ENCODE measurements at regions of chr19 and their contacts with region 1.

Region 1: GRCh38 chr19:43416951-43417623 is 2.4 kb downstream of the TEX101 start:
- DNase-seq: no peak
- H3K4me3 ChIP-seq: no peak overlapping the region
- H3K27ac ChIP-seq: no peak overlapping the region
- H3K4me1 ChIP-seq: no peaks in the 10 kb centered on the region
- H3K27me3 ChIP-seq: no peaks in the 10 kb centered on the region
- CTCF ChIP-seq: no peak

Region 2: GRCh38 chr19:43305658-43306057 is 111.4 kb before region 1 on chr19:
- CTCF ChIA-PET with region 1: no interaction called
- dilution Hi-C with region 1: loop called (anchors 5 kb)
- in situ Hi-C with region 1: loop called in 1 of 2 experiments (anchors 10 kb)
- intact Hi-C with region 1: no loop called
- DNase-seq: no peak
- H3K4me3 ChIP-seq: no peak overlapping the region
- H3K27ac ChIP-seq: no peak overlapping the region
- H3K4me1 ChIP-seq: peaks cover 6% of the 10 kb centered on the region
- H3K27me3 ChIP-seq: no peaks in the 10 kb centered on the region
- CTCF ChIP-seq: peak in 1 of 2 donors; percentile 5

Region 3: DNA sequence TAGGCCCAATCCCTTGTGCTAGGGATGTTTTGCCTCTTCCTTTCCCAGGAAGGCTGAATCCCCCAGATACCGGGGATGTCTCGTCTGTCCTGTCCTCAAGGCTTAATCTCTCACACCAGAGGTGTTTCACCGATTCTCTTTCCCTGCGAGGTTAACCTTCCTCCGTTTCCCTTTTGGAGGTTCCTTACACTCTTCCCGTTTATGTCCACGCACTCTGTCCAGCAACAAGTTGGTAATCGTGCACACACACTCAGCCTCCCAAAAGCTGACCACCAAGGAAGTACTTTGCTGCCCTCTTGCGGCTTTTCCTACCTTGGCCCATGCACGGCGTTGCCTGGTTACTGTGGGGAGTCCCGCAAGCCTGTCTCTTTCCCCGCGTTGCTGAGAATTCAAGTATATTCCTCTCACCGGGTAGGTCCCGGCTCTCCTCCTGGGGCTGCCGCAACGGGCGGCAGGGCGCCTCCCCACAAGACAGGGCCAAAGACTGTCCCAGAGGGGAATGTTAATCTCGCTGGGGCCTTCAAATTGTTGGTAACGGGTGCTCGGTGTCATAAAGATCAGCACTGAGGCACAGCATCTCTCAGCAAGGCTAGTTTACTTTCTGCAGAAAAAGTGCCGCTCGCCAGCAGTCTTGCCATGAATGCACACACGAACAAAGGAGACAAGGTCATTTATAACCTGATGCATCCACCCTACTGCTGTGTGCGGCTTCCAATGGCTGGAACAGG is 100.3 kb before region 1 on chr19:
- CTCF ChIA-PET with region 1: no interaction called
- dilution Hi-C with region 1: no loop called
- in situ Hi-C with region 1: loop called in 1 of 2 experiments (anchors 10 kb)
- intact Hi-C with region 1: no loop called
- DNase-seq: no peak
- H3K4me3 ChIP-seq: no peak overlapping the region
- H3K27ac ChIP-seq: no peak overlapping the region
- H3K4me1 ChIP-seq: no peaks in the 10 kb centered on the region
- H3K27me3 ChIP-seq: no peaks in the 10 kb centered on the region
- CTCF ChIP-seq: peak; percentile 74 to 89

Region 4: GRCh38 chr19:43463381-43464136 is 46.5 kb after region 1 on chr19:
- CTCF ChIA-PET with region 1: no interaction called
- dilution Hi-C with region 1: loop called (anchors 5 kb)
- in situ Hi-C with region 1: no loop called
- intact Hi-C with region 1: no loop called
- DNase-seq: peak; percentile 91
- H3K4me3 ChIP-seq: peak overlapping the region; percentile 32 to 79 (median 54)
- H3K27ac ChIP-seq: peak overlapping the region; percentile 53
- H3K4me1 ChIP-seq: peaks cover 37% of the 10 kb centered on the region
- H3K27me3 ChIP-seq: no peaks in the 10 kb centered on the region
- CTCF ChIP-seq: no peak